ENCODE measurements at regions of chr20 and their contacts with region 1.

Region 1: DNA sequence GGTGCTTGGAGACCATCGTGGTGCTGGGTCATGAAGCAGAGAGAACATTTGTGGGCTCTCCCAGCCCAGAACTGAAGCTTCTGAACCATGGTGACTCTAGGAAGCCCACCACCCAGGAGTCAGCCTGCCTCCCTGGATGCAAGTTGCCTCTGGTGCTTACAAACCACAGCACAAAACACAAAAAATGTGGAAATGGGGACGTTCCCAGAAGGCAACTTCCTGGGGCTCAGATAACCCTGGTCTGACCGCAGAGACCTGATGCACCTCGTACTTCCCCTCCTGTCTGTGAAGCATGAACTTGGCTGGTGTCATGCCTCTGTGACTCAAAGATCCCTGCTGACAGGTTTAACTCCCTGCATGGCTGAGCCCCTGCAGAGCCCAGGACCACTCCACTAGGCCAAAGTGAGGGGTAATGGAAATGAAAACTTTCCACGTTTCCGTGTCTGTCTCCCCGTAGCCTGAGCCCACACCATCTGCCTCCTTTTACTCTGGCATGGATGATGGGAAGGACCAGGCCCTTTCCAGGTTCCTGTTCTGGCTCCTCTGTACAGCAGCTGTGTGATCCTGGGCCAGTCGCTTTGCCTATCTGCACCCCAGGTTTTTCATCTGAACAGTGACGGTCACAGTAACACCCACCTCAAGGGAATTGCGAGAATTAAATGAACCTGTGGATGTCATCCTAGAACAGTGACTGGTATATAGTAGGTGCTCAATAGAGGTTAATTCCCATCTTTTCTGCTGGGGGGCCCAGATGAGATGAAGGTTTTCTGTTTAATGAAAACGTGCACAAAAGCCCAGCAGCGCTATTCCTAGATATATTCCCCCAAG is 57.7 kb downstream of the PPP1R16B start:
- DNase-seq: peak in 8 of 14 experiments; percentile 21 to 89 (median 49)
- ATAC-seq: peak; percentile 81
- H3K4me3 ChIP-seq: peak overlapping the region; percentile 4
- H3K4me3 Mint-ChIP-seq: peak overlapping the region; percentile 43
- H3K27ac ChIP-seq: peak overlapping the region; percentile 34 to 75
- H3K27ac Mint-ChIP-seq: peak overlapping the region; percentile 81
- H3K4me1 ChIP-seq: peaks cover 67% of the 10 kb centered on the region
- H3K4me1 Mint-ChIP-seq: peaks cover 55% of the 10 kb centered on the region
- H3K27me3 ChIP-seq: no peaks in the 10 kb centered on the region
- H3K27me3 Mint-ChIP-seq: no peaks in the 10 kb centered on the region
- CTCF ChIP-seq: no peak

Region 2: DNA sequence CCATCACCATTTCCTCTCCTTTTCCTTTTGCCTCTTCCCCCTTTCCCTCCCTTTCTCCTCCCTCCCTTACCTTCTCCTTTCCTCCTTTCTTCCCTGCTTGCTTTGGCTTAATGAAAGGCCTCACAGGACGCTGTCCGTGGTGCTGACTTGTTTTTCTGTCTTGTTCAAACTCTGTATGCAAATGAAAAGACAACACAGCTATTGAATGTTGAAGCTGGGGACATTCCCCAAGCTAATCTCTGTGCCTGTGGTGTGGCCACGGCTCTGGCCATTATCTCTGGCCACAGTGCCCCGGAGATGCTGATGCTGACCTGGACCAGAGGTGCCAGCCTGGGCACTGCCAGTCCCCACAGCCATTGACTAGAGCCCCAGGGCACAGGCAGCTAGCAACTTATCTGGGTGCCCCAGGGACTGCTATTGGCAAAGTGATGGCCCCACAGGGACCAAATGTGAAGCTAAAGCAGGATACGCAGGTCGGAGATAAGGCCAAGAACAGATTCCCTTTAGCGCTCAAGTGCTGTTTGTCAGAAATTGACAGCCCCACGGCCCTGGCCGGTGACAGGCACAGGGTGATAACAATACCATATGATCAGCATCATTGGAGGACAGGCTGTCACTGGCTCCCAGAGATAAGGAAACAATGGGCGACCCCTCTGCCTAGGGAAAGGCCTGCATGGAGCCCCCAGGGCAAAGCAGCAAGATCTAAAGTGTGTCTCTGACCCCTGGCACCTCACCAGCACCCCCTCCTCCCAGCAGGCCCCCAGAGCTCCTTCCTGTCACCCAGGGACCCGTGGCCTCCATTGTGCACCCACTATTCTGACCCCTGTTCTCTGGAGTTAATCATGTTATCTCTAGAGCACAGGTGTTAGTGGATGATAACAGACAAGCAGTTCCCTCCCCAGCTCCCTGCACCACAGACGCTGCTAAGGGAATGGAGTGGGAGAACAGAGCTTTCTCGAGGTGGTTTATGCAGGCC is 170.5 kb before region 1 on chr20:
- CTCF ChIA-PET with region 1: no interaction called
- POLR2A ChIA-PET with region 1: no interaction called
- intact Hi-C with region 1: no loop called
- DNase-seq: peak; percentile 24 to 69 (median 38)
- ATAC-seq: peak; percentile 43
- H3K4me3 ChIP-seq: no peak overlapping the region
- H3K4me3 Mint-ChIP-seq: no peak overlapping the region
- H3K27ac ChIP-seq: no peak overlapping the region
- H3K27ac Mint-ChIP-seq: no peak overlapping the region
- H3K4me1 ChIP-seq: no peaks in the 10 kb centered on the region
- H3K4me1 Mint-ChIP-seq: no peaks in the 10 kb centered on the region
- H3K27me3 ChIP-seq: peaks cover 13 to 17% of the 10 kb centered on the region in 2 experiments
- H3K27me3 Mint-ChIP-seq: peaks cover 58% of the 10 kb centered on the region
- CTCF ChIP-seq: no peak

Region 3: DNA sequence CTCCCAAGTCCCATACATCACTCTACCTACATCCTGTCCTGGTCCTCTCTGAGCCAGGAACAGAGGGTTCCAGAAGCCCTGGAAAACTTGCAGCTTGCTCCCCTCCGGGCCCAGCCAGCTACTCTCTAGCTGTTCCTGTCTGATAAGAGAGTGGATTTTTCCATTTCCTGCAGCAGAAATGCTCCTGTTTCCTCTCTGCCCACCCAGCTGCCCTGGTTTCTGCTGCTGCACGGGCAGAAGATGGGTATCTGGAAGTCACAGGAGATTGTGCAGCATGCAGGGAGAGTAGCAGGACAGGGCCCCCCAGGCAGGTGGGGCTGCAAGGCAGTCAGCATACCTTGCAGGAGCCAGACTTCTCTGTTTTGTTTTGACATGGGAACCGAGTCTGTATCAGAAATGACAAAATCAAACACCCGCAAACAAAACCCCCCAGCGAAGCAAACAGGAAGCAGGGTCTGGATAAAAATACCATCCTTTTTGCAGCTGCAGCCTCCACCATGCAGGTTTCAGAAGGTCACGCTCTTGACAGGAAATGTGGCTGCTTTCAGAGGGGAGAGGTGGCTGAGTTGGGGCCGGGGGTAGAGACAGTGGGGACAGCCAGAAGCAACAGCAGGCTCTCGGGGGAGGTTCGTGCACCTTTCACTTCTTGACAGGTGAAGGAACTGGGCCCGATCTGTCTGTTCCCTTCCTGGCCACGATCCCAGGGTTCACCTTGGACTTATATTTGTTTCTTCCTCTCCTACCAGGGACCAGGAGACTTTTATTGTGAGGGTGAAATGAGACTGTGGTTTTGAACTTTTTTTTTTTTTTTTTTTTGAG is 12.1 kb after region 1 on chr20:
- CTCF ChIA-PET with region 1: no interaction called
- POLR2A ChIA-PET with region 1: interaction called, 5 read pairs
- intact Hi-C with region 1: loop called in 1 of 2 experiments (anchors 2 kb)
- DNase-seq: peak; percentile 45 to 89 (median 62)
- ATAC-seq: peak; percentile 51
- H3K4me3 ChIP-seq: peak overlapping the region; percentile 40
- H3K4me3 Mint-ChIP-seq: peak overlapping the region; percentile 84
- H3K27ac ChIP-seq: peak overlapping the region; percentile 76 to 89
- H3K27ac Mint-ChIP-seq: peak overlapping the region; percentile 89
- H3K4me1 ChIP-seq: peaks cover 70% of the 10 kb centered on the region
- H3K4me1 Mint-ChIP-seq: peaks cover 98% of the 10 kb centered on the region
- H3K27me3 ChIP-seq: no peaks in the 10 kb centered on the region
- H3K27me3 Mint-ChIP-seq: no peaks in the 10 kb centered on the region
- CTCF ChIP-seq: no peak

Region 4: DNA sequence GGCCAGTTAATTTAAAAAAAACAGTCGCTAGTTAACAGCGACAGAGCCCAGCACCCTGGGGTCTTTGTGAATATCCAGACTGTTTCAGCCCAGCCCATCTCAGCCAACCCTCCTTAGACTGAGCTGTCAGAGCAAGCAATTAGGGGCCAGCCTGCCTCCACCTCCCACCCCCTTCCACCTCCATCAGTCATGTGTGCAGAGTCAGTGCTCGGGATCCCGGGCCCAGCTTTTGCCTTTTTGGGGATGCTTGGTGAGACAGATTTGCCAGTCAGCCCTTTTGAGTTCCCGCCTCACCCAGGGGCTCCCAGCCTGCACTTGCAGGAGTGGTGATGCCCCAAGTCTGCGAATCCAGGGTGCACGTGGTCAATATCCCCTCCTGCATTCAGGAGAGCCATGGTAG is 56.4 kb after region 1 on chr20:
- CTCF ChIA-PET with region 1: no interaction called
- POLR2A ChIA-PET with region 1: no interaction called
- intact Hi-C with region 1: no loop called
- DNase-seq: no peak
- ATAC-seq: no peak
- H3K4me3 ChIP-seq: no peak overlapping the region
- H3K4me3 Mint-ChIP-seq: no peak overlapping the region
- H3K27ac ChIP-seq: no peak overlapping the region
- H3K27ac Mint-ChIP-seq: no peak overlapping the region
- H3K4me1 ChIP-seq: no peaks in the 10 kb centered on the region
- H3K4me1 Mint-ChIP-seq: no peaks in the 10 kb centered on the region
- H3K27me3 ChIP-seq: no peaks in the 10 kb centered on the region
- H3K27me3 Mint-ChIP-seq: no peaks in the 10 kb centered on the region
- CTCF ChIP-seq: no peak

Region 5: DNA sequence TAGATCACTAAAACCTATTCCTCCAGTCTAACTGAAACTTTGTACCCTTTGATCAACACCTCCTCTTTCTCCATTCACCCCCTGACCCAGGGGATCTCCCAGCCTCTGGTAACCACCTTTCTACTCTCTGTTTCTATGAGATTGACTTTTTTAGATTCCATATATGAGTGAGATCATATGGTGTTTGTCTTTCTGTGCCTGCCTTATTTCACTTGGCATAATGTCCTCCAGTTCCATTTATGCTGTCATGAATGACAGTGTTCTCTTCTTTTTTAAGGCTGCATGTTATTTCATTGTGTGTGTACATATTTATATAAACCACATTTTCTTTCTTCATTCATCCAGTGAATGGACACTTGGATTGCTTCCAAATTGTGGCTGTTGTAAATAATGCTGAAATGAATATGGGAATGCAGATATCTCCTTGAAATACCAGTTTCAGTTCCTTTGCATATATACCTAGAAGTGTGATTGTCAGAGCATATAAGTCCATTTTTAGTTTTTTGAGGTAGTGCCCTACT is 156.6 kb after region 1 on chr20:
- CTCF ChIA-PET with region 1: no interaction called
- POLR2A ChIA-PET with region 1: no interaction called
- intact Hi-C with region 1: no loop called
- DNase-seq: no peak
- ATAC-seq: no peak
- H3K4me3 ChIP-seq: no peak overlapping the region
- H3K4me3 Mint-ChIP-seq: no peak overlapping the region
- H3K27ac ChIP-seq: no peak overlapping the region
- H3K27ac Mint-ChIP-seq: no peak overlapping the region
- H3K4me1 ChIP-seq: no peaks in the 10 kb centered on the region
- H3K4me1 Mint-ChIP-seq: peaks cover 2% of the 10 kb centered on the region
- H3K27me3 ChIP-seq: no peaks in the 10 kb centered on the region
- H3K27me3 Mint-ChIP-seq: no peaks in the 10 kb centered on the region
- CTCF ChIP-seq: no peak

Region 6: GRCh38 chr20:39245685-39246311 is 382.6 kb after region 1 on chr20:
- CTCF ChIA-PET with region 1: no interaction called
- POLR2A ChIA-PET with region 1: no interaction called
- intact Hi-C with region 1: no loop called
- DNase-seq: no peak
- ATAC-seq: no peak
- H3K4me3 ChIP-seq: no peak overlapping the region
- H3K4me3 Mint-ChIP-seq: no peak overlapping the region
- H3K27ac ChIP-seq: no peak overlapping the region
- H3K27ac Mint-ChIP-seq: no peak overlapping the region
- H3K4me1 ChIP-seq: peaks cover 9% of the 10 kb centered on the region
- H3K4me1 Mint-ChIP-seq: peaks cover 20% of the 10 kb centered on the region
- H3K27me3 ChIP-seq: no peaks in the 10 kb centered on the region
- H3K27me3 Mint-ChIP-seq: no peaks in the 10 kb centered on the region
- CTCF ChIP-seq: no peak

Measured in CD4-positive, alpha-beta T cell (primary cell).